Panc1 (cell line): ENCODE measurements at regions of chr20 and their contacts with region 1.

Region 1: GRCh38 chr20:6024768-6025167 is 29.1 kb downstream of the LRRN4 start:
- DNase-seq: no peak
- ATAC-seq: no peak
- H3K4me3 ChIP-seq: no peak overlapping the region
- H3K27ac ChIP-seq: no peak overlapping the region
- H3K4me1 ChIP-seq: no peaks in the 10 kb centered on the region
- H3K27me3 ChIP-seq: no peaks in the 10 kb centered on the region
- CTCF ChIP-seq: no peak

Region 2: GRCh38 chr20:5973172-5973571 is 51.6 kb before region 1 on chr20:
- CTCF ChIA-PET with region 1: no interaction called
- POLR2A ChIA-PET with region 1: no interaction called
- in situ Hi-C with region 1: no loop called
- intact Hi-C with region 1: no loop called
- DNase-seq: no peak
- ATAC-seq: no peak
- H3K4me3 ChIP-seq: no peak overlapping the region
- H3K27ac ChIP-seq: no peak overlapping the region
- H3K4me1 ChIP-seq: no peaks in the 10 kb centered on the region
- H3K27me3 ChIP-seq: no peaks in the 10 kb centered on the region
- CTCF ChIP-seq: no peak

Region 3: DNA sequence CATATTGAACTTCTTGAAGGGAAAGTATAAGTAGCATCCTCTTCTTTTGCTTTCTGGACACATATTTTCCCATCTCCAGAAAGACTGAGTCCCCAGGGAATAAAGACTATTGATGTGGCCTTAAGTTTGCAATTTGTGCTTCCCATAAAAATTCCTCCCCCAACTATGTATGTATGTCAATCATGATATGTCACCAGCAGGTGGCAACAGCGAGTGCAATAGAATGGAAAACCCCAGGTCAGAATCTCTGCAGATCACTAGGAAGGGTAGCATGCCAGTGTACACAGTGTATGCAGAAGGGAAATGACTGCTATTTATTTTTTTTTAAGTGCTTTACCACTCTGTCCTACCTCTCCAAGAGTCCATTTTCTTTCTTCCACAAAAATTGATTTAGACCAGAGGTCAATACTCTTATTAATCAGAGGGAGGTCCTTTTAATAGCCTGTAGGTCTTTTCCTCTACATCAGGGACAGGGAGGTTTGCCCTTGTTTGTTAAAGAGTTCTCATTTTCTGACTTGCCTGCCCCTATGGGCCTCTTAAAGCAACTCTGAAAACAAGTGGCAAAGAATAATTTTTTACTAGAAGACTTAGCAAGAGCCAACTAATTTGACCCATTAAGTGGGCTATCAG is 804.1 kb after region 1 on chr20:
- CTCF ChIA-PET with region 1: interaction called, 10 read pairs
- POLR2A ChIA-PET with region 1: no interaction called
- in situ Hi-C with region 1: no loop called
- intact Hi-C with region 1: no loop called
- DNase-seq: peak; percentile 42
- ATAC-seq: peak; percentile 88
- H3K4me3 ChIP-seq: no peak overlapping the region
- H3K27ac ChIP-seq: no peak overlapping the region
- H3K4me1 ChIP-seq: no peaks in the 10 kb centered on the region
- H3K27me3 ChIP-seq: no peaks in the 10 kb centered on the region
- CTCF ChIP-seq: peak; percentile 73